Ascending aorta (tissue), 2 donors: ENCODE measurements at regions of chr2 and their contacts with region 1.

Region 1: DNA sequence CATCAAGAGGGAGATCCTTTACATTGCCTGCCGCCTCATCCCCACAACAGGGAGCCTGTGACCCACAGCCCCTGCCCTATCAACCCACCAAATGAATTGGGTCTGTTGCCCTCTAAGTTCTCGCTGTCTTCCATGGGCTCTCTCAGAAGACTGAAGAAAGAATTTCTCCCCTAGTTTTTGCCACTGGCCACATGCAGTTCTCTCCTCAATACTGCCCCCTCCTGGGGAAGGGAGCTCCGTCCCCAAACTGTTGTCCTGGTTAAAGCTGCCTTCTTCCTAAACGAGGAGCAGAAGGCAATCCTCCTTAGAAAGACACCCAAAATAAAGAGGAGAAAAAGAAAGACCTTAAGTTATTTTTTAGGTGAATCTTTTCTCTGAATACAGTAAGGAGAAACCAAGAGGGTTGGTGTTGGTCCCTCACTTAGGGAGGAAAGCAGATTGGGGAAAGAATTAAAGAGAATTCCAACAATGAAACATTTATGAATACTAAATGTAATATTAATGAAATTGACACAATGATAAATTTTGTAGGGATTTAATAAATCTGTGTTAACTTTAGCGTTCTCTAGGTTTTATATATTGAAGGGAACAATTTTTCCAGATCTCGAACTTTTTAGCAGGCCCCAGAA is 31.1 kb upstream of the SATB2 start:
- DNase-seq: peak in 1 of 2 donors; percentile 73
- H3K4me3 ChIP-seq: no peak overlapping the region
- H3K27ac ChIP-seq: no peak overlapping the region
- H3K4me1 ChIP-seq: no peaks in the 10 kb centered on the region
- H3K27me3 ChIP-seq: no peaks in the 10 kb centered on the region
- CTCF ChIP-seq: peak in 2 of 3 experiments; percentile 52 to 60

Region 2: DNA sequence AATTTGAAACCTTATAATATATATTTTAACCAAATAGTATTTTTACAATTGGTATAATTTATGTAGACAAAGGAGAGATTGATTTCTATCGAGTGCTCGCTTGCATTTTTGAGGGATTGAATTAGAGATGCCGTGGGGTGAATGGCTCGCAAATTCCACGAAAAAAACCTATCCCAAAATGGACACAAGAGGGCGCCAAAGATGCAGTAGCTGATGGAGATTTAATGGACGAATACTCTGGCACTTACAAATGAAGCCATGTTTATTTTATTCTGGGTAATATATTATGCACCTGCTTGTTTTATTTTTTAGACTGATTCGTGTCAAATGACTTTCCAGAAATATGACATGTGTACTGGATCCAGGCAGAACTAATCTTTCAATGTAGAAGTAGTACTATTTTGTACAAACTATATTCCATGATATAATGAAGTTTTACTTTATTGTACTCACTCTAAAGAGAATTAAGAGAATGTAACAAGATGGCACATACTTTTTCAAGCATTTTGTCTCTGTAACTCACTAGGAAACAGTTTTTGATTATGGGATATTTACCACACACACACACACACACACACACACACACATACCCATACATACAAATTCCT is 1179.1 kb before region 1 on chr2:
- intact Hi-C with region 1: loop called (anchors 2 kb)
- DNase-seq: no peak
- H3K4me3 ChIP-seq: no peak overlapping the region
- H3K27ac ChIP-seq: no peak overlapping the region
- H3K4me1 ChIP-seq: no peaks in the 10 kb centered on the region
- H3K27me3 ChIP-seq: no peaks in the 10 kb centered on the region
- CTCF ChIP-seq: peak; percentile 23 to 82 (median 78)

Region 3: DNA sequence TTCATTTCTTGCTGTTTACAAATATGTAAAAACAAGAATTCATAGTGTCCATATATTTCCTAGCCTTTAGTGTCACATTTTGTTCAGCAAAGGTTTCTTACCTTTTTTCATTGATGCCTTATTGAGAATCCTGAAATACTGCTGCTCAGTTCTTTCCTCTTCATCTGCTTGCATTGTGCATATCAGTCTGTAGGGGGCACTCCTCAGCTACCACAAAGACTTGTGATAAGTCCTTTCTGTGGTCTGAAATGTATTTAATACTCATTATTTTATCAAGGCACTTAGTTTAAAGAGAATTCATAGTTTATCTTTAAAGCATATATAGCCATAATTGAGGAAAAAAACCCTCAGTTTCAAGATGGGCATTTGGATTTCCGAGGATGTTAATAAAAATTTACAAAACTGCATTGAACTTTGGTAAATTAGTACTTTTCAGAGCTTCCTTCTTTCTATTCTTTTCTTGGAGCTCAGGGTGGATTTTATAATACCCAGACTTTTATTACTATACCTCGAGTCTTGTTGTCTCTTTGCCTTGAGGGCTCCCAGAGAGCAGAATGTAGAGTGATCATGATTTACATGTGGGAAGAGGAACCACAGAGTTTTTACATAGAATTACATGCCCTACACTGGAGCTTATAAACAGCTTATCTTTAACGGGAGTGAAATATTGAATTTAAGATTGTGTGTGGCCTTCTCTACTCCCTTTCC is 1114.4 kb before region 1 on chr2:
- intact Hi-C with region 1: loop called (anchors 5 kb)
- DNase-seq: no peak
- H3K4me3 ChIP-seq: no peak overlapping the region
- H3K27ac ChIP-seq: no peak overlapping the region
- H3K4me1 ChIP-seq: no peaks in the 10 kb centered on the region
- H3K27me3 ChIP-seq: no peaks in the 10 kb centered on the region
- CTCF ChIP-seq: peak; percentile 31 to 68 (median 60)